Calu3 (cell line): ENCODE measurements at regions of chr2 and their contacts with region 1.

Region 1: DNA sequence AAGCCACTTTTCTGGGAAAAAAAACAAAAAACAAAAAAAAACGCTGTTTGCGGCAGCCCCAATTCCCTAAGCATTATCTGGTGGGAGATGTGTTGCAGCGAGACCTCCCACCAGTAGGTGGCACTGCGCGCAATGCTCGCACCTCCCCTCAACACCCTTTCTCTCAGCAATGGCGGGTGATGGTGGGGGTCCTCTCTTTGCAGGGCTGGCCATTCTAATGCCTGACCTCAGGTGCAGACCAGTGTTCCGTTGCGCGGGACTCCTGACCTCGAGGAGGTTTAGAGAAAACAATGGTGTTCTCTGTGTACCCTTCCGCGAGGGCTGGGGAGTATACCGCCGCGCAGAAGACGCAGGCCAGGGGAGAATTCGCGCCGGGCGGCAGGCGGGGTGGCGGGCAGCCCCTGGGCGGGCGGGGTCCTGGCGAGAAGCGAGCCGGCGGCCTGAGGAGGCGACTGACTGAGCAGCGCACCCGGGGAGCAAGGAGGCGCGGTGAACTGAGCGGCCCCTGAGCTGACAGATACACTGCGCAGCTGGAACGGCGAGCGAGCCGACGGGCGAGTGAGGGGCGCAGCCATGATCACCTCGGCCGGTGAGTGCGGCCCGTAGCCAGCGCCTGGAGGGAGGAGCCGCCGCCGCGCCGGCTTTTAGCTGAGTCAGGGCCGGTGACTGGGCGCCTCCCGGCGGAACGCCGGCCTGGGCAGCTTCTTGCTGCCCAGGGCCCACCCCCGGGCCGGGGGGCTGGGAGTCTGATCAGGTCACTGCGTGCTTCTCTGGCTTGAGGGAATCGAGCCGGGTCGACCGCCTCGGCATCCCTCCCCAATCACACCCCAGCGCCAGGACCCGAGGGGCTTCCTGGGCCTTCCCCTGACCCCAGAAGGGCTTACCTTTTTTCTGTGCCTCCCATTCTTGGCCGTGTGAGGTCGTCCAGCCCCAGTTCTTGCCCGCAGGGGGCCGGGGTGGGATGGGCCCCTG is at the start of gene PSMD1:
- DNase-seq: peak; percentile 94
- H3K4me3 Mint-ChIP-seq: peak within 1 kb of the TSS; percentile 85
- H3K27ac Mint-ChIP-seq: peak within 1 kb of the TSS; percentile 97
- H3K4me1 Mint-ChIP-seq: peaks cover 40% of the 10 kb centered on the region
- H3K27me3 Mint-ChIP-seq: peaks cover 16% of the 10 kb centered on the region
- CTCF ChIP-seq: peak; percentile 77
- total RNA-seq, gene PSMD1: 113 and 135 TPM in 2 replicates

Region 2: GRCh38 chr2:230824406-230824978 is 232.2 kb before region 1 on chr2:
- CTCF ChIA-PET with region 1: interaction called, 10 read pairs
- intact Hi-C with region 1: loop called (anchors 2 kb)
- DNase-seq: peak; percentile 66
- H3K4me3 Mint-ChIP-seq: peak overlapping the region; percentile 32
- H3K27ac Mint-ChIP-seq: no peak overlapping the region
- H3K4me1 Mint-ChIP-seq: peaks cover 8% of the 10 kb centered on the region
- H3K27me3 Mint-ChIP-seq: peaks cover 51% of the 10 kb centered on the region
- CTCF ChIP-seq: peak; percentile 75

Region 3: DNA sequence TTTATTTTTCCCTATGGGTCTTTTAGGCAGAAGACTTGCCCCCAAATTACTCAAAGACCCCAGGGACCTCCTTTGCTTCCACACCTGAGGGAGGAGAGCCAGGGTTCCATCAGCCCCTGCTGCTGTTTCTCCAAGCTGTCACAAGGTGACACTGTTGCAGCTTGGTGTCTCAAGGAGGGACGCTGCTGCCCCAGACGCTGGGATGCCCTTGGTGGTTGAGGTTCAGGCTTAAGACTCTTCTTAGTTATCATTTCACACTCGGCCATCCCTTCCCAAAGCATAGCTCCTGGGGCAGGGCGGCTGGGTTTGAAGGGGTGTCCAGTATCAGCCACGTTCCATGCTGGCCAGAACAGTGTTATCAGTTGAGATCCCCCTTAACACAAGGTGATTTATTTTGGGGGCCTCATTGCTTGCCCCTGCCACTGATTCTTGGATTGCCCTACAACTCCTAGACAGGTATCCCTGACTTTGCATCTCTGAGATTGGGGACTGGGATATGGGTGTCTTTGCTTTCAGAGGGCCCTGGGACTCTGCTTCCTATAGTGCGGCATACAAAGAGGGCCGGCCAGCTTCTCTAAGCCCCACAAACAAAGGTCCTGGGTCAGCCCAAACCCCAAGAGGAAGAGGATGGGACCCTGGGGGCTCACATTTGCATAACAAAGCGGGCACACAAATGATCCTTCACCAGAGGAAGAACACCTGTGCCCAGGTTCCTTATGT is 154.4 kb before region 1 on chr2:
- CTCF ChIA-PET with region 1: interaction called, 3 read pairs
- intact Hi-C with region 1: loop called (anchors 10 kb)
- DNase-seq: peak; percentile 50
- H3K4me3 Mint-ChIP-seq: no peak overlapping the region
- H3K27ac Mint-ChIP-seq: no peak overlapping the region
- H3K4me1 Mint-ChIP-seq: no peaks in the 10 kb centered on the region
- H3K27me3 Mint-ChIP-seq: peaks cover 93% of the 10 kb centered on the region
- CTCF ChIP-seq: peak; percentile 78

Region 4: DNA sequence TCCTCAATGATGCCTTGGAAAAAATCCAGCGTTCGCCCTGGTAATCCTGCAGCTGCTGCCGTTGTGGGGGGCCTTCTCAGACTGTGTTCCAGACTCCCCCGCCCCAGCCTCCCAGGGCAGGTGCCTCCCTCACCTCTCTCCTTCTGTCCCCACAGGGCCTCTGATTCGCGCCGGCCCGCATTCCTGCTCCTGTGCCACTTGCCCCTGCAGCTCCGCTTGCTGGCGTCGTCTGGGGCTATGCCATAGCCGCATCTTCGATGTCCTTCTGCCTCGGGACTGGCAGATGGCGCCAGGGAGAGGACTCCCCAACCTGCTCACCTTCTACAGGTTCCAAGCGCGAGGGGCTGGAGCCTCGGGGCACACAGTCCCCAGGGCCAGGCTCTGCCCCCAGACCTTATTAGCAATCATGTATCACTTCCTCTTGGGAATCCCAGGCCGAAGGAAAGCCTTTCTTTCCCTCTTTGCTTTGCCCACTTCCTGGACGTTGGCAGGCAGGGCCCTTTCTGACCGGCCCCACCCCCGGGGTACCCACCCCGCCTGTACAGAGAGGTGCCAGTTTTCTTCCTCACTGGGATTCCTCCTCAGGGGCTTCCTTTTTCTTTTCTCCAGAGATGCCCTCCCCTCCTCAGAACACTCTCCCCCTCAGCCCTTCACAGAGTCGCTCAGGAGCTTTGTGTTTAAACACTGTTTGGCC is 56.4 kb before region 1 on chr2:
- CTCF ChIA-PET with region 1: interaction called, 13 read pairs
- intact Hi-C with region 1: loop called (anchors 2 kb)
- DNase-seq: peak; percentile 61
- H3K4me3 Mint-ChIP-seq: peak overlapping the region; percentile 38
- H3K27ac Mint-ChIP-seq: no peak overlapping the region
- H3K4me1 Mint-ChIP-seq: peaks cover 11% of the 10 kb centered on the region
- H3K27me3 Mint-ChIP-seq: peaks cover 100% of the 10 kb centered on the region
- CTCF ChIP-seq: no peak